B cell (primary cell): ENCODE measurements at regions of chr2 and their contacts with region 1.

Region 1: DNA sequence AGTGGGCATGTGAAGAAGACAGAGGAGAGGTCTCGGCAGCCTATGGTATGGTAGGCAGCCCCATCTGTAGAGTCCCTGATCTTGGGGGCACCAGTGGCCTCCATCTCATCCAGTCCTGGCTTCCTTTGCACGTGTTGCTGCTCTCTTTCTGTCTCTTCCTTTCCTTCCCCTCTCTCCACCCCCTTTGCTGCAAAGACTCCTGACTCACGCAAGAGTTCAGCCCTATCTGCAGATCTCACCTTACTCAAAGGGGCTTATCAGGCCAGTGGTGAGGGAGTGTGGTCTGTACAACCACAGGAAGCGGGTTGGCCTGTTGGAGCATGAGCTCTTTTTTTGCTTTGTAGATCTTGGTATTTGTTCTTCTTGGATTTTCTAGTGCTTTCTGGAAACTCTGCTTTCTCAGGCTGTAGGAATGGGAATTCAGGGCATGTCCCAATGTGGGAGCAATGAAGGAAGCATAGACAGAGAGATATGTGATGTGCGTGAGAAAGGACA is 14.6 kb upstream of the NT5DC4 start:
- DNase-seq: peak; percentile 45
- ATAC-seq: peak; percentile 28
- H3K4me3 ChIP-seq: no peak overlapping the region
- H3K4me3 Mint-ChIP-seq: peak overlapping the region; percentile 32
- H3K27ac ChIP-seq: no peak overlapping the region
- H3K27ac Mint-ChIP-seq: peak overlapping the region; percentile 81
- H3K4me1 ChIP-seq: peaks cover 58 to 73% of the 10 kb centered on the region in 2 donors
- H3K4me1 Mint-ChIP-seq: peaks cover 72% of the 10 kb centered on the region
- H3K27me3 ChIP-seq: no peaks in the 10 kb centered on the region
- H3K27me3 Mint-ChIP-seq: no peaks in the 10 kb centered on the region
- CTCF ChIP-seq: no peak

Region 2: GRCh38 chr2:112645310-112646101 is 60.7 kb before region 1 on chr2 and contains the start of gene SLC20A1:
- CTCF ChIA-PET with region 1: interaction called, 4 read pairs
- POLR2A ChIA-PET with region 1: interaction called, 4 read pairs
- intact Hi-C with region 1: loop called (anchors 5 kb)
- DNase-seq: peak; percentile 98
- ATAC-seq: peak; percentile 93
- H3K4me3 ChIP-seq: peak within 1 kb of the TSS; percentile 65 to 98 (median 90)
- H3K4me3 Mint-ChIP-seq: peak within 1 kb of the TSS; percentile 94
- H3K27ac ChIP-seq: peak within 1 kb of the TSS; percentile 90 to 96
- H3K27ac Mint-ChIP-seq: peak within 1 kb of the TSS; percentile 90
- H3K4me1 ChIP-seq: peaks cover 15 to 20% of the 10 kb centered on the region in 2 donors
- H3K4me1 Mint-ChIP-seq: peaks cover 26% of the 10 kb centered on the region
- H3K27me3 ChIP-seq: no peaks in the 10 kb centered on the region
- H3K27me3 Mint-ChIP-seq: no peaks in the 10 kb centered on the region
- CTCF ChIP-seq: peak; percentile 69
- total RNA-seq, gene SLC20A1: 54.9 and 57.1 TPM in 2 replicates

Region 3: DNA sequence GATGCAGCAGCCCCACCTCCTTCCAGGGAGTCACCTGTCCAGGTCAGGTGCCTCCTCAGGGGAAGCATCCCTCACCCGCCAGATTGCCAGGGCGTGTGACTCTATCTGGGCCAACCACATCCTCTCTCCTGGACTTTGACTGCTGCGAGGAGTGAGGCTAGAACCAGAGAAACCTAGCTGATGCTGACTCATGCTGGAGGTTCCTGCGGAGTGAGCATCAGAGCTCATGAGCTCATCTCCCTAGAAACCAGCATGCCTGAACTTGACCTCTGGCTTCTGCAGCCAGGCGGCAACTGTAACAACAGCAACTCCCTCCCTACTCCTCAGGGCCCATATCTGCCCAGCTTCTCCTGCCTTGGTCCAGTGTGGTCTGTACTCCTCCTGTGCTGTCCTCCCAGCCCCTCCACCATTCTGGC is 13.7 kb before region 1 on chr2:
- CTCF ChIA-PET with region 1: interaction called, 24 read pairs
- POLR2A ChIA-PET with region 1: interaction called, 4 read pairs
- intact Hi-C with region 1: no loop called
- DNase-seq: no peak
- ATAC-seq: no peak
- H3K4me3 ChIP-seq: no peak overlapping the region
- H3K4me3 Mint-ChIP-seq: no peak overlapping the region
- H3K27ac ChIP-seq: no peak overlapping the region
- H3K27ac Mint-ChIP-seq: no peak overlapping the region
- H3K4me1 ChIP-seq: peaks cover 0 to 23% of the 10 kb centered on the region in 2 donors
- H3K4me1 Mint-ChIP-seq: peaks cover 17% of the 10 kb centered on the region
- H3K27me3 ChIP-seq: no peaks in the 10 kb centered on the region
- H3K27me3 Mint-ChIP-seq: no peaks in the 10 kb centered on the region
- CTCF ChIP-seq: no peak

Region 4: DNA sequence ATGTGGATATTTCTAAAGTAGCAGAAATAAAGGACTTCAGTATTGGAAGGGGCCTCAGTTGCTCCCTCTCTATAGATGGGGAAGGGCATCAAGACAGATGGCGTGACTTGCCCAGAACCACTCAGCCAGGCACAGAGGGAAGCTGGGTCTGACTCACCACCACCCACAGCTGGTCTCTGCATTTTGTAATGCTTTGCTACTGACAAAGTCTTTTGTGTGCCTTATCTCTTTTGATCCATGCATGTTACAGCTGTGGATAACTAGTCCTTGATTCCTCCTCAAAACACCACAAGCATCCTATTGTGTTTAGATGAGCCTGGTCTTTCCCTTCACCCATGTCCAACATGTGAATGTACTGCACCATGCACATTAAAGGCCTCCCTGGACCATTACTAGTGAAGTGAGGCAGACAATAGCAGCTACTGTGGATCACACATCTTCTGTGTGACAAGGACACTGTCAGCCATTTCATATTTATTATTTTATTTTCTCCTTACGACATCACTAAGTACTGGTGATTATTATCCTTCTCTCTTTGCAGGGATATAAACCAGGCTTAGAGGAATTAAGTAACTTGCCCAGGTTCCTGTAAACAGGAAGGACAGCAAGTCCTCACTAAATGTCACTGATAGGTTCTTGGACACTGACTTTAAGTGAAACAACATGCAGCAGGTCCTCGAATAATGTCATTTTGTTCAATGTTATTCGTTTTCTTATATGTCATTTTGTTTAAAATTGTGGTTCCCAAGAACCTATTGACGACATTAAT is 175.2 kb after region 1 on chr2:
- CTCF ChIA-PET with region 1: no interaction called
- POLR2A ChIA-PET with region 1: no interaction called
- intact Hi-C with region 1: no loop called
- DNase-seq: no peak
- ATAC-seq: peak; percentile 65
- H3K4me3 ChIP-seq: no peak overlapping the region
- H3K4me3 Mint-ChIP-seq: peak overlapping the region; percentile 21
- H3K27ac ChIP-seq: no peak overlapping the region
- H3K27ac Mint-ChIP-seq: peak overlapping the region; percentile 47
- H3K4me1 ChIP-seq: peaks cover 7 to 20% of the 10 kb centered on the region in 2 donors
- H3K4me1 Mint-ChIP-seq: peaks cover 23% of the 10 kb centered on the region
- H3K27me3 ChIP-seq: no peaks in the 10 kb centered on the region
- H3K27me3 Mint-ChIP-seq: no peaks in the 10 kb centered on the region
- CTCF ChIP-seq: no peak